ENCODE measurements at regions of chr3 and their contacts with region 1.

Region 1: GRCh38 chr3:102000620-102001209 is 151.4 kb downstream of the NFKBIZ start:
- DNase-seq: no peak
- ATAC-seq: peak; percentile 31; the same call in 2 of the 3 replicates
- H3K4me3 ChIP-seq: no peak overlapping the region
- H3K27ac ChIP-seq: no peak overlapping the region
- H3K4me1 ChIP-seq: peaks cover 25% of the 10 kb centered on the region
- H3K27me3 ChIP-seq: no peaks in the 10 kb centered on the region
- CTCF ChIP-seq: no peak
- EP300 ChIP-seq: no peak
- POLR2A ChIP-seq: no peak
- RAD21 ChIP-seq: no peak

Region 2: DNA sequence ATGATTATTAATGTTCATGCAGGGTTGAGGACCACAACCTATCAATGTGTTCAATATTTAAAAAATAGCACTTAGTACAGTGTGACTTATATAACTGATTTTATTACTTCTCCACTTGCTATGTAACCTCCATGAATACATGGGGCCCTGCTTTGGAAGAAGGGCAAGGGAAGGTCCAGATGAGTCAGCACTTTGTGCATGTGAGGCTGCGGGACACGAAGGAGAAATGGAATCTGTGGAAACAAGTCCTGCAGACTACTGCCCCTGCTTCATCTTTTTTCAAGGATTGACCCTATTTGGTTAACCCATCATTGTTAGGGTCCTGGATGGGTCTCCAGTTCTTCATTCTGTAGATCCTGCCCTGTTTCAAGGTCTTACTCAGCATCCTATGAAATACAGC is 220.1 kb before region 1 on chr3:
- CTCF ChIA-PET with region 1: no interaction called
- POLR2A ChIA-PET with region 1: no interaction called
- RAD21 ChIA-PET with region 1: no interaction called
- SMC1A ChIA-PET with region 1: no interaction called
- in situ Hi-C with region 1: no loop called
- intact Hi-C with region 1: no loop called
- DNase-seq: no peak
- ATAC-seq: no peak
- H3K4me3 ChIP-seq: 0 out of 2 replicates have a peak overlapping the region, but pooled peaks have one; percentile 89
- H3K27ac ChIP-seq: no peak overlapping the region
- H3K4me1 ChIP-seq: peaks cover 10% of the 10 kb centered on the region
- H3K27me3 ChIP-seq: no peaks in the 10 kb centered on the region
- CTCF ChIP-seq: no peak
- EP300 ChIP-seq: no peak
- POLR2A ChIP-seq: no peak
- RAD21 ChIP-seq: no peak

Region 3: DNA sequence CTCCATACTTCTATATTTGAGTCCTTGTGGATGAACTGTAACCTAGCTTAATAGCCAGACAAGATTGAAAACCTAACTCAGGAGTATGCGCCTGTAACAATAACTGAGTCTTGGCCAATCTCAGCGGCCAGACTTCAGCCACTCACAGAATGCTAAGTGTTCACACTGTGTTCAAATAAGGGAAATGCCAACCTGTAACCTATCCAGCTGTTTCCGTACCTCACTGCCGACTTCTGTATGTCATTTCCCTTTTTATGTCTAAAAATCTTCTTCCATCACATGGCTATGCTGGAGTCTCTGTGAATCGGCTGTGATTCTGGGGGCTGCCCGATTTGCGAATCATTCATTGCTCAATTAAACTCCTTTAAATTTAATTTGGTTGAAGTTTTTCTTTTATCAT is 17.8 kb after region 1 on chr3:
- CTCF ChIA-PET with region 1: interaction called, 6 read pairs
- POLR2A ChIA-PET with region 1: interaction called, 3 read pairs
- RAD21 ChIA-PET with region 1: interaction called, 5 read pairs
- SMC1A ChIA-PET with region 1: interaction called, 17 read pairs
- in situ Hi-C with region 1: no loop called
- intact Hi-C with region 1: no loop called
- DNase-seq: no peak
- ATAC-seq: no peak
- H3K4me3 ChIP-seq: no peak overlapping the region
- H3K27ac ChIP-seq: no peak overlapping the region
- H3K4me1 ChIP-seq: peaks cover 8% of the 10 kb centered on the region; the same call in 1 of the 2 replicates
- H3K27me3 ChIP-seq: no peaks in the 10 kb centered on the region
- CTCF ChIP-seq: no peak
- EP300 ChIP-seq: no peak
- POLR2A ChIP-seq: no peak
- RAD21 ChIP-seq: no peak

Measured in GM12878 (cell line).